Panc1 (cell line): ENCODE measurements at regions of chr6 and their contacts with region 1.

Region 1: DNA sequence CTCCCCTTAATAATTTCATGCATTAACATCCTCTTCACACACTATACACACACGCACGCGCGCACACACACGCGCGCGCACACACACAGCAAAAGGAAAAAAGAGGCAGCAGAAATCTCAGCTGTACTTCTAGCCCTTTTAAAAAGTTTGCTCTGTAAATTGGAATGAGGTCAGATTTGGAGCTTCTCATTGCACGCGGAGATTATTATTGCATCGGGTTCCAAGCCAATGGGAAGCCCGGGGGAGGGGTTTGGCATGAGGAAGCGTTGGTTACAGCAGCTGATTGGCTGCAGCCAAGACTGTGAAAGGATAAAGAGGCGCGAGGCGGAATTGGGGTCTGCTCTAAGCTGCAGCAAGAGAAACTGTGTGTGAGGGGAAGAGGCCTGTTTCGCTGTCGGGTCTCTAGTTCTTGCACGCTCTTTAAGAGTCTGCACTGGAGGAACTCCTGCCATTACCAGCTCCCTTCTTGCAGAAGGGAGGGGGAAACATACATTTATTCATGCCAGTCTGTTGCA is at the start of gene SOX4:
- DNase-seq: peak; percentile 82
- ATAC-seq: peak; percentile 80
- H3K4me3 ChIP-seq: peak within 1 kb of the TSS; percentile 95 to 96
- H3K27ac ChIP-seq: peak within 1 kb of the TSS; percentile 96
- H3K4me1 ChIP-seq: peaks cover 25% of the 10 kb centered on the region
- H3K27me3 ChIP-seq: no peaks in the 10 kb centered on the region
- CTCF ChIP-seq: no peak
- total RNA-seq, gene SOX4: 71.9 TPM

Region 2: DNA sequence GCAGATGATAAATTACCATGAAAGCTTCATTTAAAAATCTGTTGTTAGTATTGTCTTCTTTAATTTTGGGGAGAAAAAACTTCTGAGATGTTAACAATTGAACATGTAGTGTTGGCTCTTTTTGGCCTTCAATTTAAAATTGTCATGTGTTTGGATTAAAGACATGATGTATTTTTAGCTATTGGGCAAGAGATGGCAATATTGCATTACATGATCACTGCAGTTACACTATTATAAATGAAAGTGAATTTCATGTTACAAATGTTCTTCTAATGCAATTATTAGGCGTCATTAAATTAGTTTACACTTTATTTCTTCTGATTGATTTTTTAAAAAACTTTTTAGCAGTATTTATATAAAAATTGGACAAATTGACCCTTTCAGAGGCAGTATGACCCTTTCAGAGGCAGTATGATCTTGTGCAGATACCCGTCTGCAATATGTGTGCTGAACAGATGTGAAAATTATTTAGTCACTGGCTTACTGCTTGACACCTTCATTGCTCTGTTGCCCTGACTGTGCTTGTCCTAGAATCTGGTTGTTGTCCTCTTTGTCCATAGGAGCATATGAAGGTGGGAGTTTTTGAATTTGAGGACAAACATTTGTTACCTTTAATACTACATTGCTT is 1033.4 kb before region 1 on chr6:
- CTCF ChIA-PET with region 1: interaction called, 8 read pairs
- POLR2A ChIA-PET with region 1: no interaction called
- in situ Hi-C with region 1: no loop called
- intact Hi-C with region 1: loop called (anchors 2 kb)
- DNase-seq: no peak
- ATAC-seq: no peak
- H3K4me3 ChIP-seq: no peak overlapping the region
- H3K27ac ChIP-seq: no peak overlapping the region
- H3K4me1 ChIP-seq: peaks cover 6% of the 10 kb centered on the region; the same call in 1 of the 2 replicates
- H3K27me3 ChIP-seq: no peaks in the 10 kb centered on the region
- CTCF ChIP-seq: no peak

Region 3: DNA sequence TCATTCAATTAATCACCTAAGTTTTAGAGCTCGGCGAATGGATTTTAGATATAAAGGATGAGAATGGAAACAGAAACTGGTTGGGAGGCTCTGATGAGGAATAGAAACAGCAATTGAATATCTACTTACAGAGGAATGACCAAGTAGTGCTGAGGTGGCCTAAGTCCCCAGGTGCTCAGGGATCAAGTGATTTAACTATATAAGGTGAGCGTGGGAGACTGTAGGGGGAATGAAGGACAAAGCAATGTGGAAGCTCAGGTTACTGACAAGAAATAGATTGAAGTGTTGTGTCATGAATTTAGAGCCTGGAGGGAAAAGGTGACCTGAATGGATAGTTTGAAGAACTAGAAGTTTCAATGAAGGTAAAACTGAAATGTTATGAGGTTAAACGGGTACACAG is 495.3 kb before region 1 on chr6:
- CTCF ChIA-PET with region 1: interaction called, 15 read pairs
- POLR2A ChIA-PET with region 1: no interaction called
- in situ Hi-C with region 1: no loop called
- intact Hi-C with region 1: no loop called
- DNase-seq: no peak
- ATAC-seq: no peak
- H3K4me3 ChIP-seq: no peak overlapping the region
- H3K27ac ChIP-seq: no peak overlapping the region
- H3K4me1 ChIP-seq: no peaks in the 10 kb centered on the region
- H3K27me3 ChIP-seq: no peaks in the 10 kb centered on the region
- CTCF ChIP-seq: no peak

Region 4: GRCh38 chr6:21634582-21634981 is 41.1 kb after region 1 on chr6:
- CTCF ChIA-PET with region 1: no interaction called
- POLR2A ChIA-PET with region 1: no interaction called
- in situ Hi-C with region 1: no loop called
- intact Hi-C with region 1: no loop called
- DNase-seq: peak; percentile 84
- ATAC-seq: peak; percentile 92
- H3K4me3 ChIP-seq: no peak overlapping the region
- H3K27ac ChIP-seq: peak overlapping the region; percentile 58; the same call in 1 of the 2 replicates
- H3K4me1 ChIP-seq: no peaks in the 10 kb centered on the region
- H3K27me3 ChIP-seq: no peaks in the 10 kb centered on the region
- CTCF ChIP-seq: no peak

Region 5: GRCh38 chr6:21664314-21665109 is 71.0 kb after region 1 on chr6:
- CTCF ChIA-PET with region 1: no interaction called
- POLR2A ChIA-PET with region 1: interaction called, 12 read pairs
- in situ Hi-C with region 1: no loop called
- intact Hi-C with region 1: no loop called
- DNase-seq: no peak
- ATAC-seq: peak; percentile 63
- H3K4me3 ChIP-seq: peak overlapping the region; percentile 33 to 78
- H3K27ac ChIP-seq: no peak overlapping the region; the same call in 1 of the 2 replicates
- H3K4me1 ChIP-seq: no peaks in the 10 kb centered on the region; the same call in none of the 2 replicates
- H3K27me3 ChIP-seq: no peaks in the 10 kb centered on the region
- CTCF ChIP-seq: no peak

Region 6: GRCh38 chr6:21752054-21752811 is 158.8 kb after region 1 on chr6:
- CTCF ChIA-PET with region 1: no interaction called
- POLR2A ChIA-PET with region 1: no interaction called
- in situ Hi-C with region 1: no loop called
- intact Hi-C with region 1: no loop called
- DNase-seq: no peak
- ATAC-seq: peak; percentile 73
- H3K4me3 ChIP-seq: no peak overlapping the region
- H3K27ac ChIP-seq: peak overlapping the region; percentile 100
- H3K4me1 ChIP-seq: peaks cover 88% of the 10 kb centered on the region
- H3K27me3 ChIP-seq: no peaks in the 10 kb centered on the region
- CTCF ChIP-seq: no peak

Region 7: GRCh38 chr6:21808045-21808470 is 214.6 kb after region 1 on chr6:
- CTCF ChIA-PET with region 1: no interaction called
- POLR2A ChIA-PET with region 1: interaction called, 10 read pairs
- in situ Hi-C with region 1: no loop called
- intact Hi-C with region 1: loop called (anchors 10 kb)
- DNase-seq: no peak
- ATAC-seq: peak; percentile 87
- H3K4me3 ChIP-seq: peak overlapping the region in 1 of 2 experiments; percentile 19; a peak in 2 of 4 replicates
- H3K27ac ChIP-seq: peak overlapping the region; percentile 97
- H3K4me1 ChIP-seq: peaks cover 30% of the 10 kb centered on the region
- H3K27me3 ChIP-seq: no peaks in the 10 kb centered on the region
- CTCF ChIP-seq: no peak

Region 8: DNA sequence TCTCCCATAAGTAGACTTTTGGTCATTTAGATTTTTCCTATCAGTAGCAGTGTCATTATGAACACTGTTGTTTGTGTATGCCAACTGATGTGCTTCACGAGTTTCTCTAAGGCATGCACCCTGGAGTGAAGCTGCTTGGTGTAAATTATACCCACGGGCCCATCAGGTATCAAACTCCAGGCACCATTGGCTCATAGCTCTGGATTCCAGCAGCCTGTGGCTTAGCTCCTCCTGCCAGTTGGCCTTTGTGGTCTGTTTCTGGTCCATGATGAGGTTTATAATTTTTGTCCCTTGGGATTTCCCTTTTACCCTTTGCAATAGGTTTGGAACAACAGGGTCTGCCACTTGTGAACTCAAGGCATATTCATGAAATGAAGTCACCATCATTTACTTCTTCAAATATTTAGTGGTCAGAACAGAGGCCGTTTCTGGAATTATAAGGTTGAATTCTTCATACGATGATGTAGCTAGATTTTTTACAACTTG is 352.9 kb after region 1 on chr6:
- CTCF ChIA-PET with region 1: no interaction called
- POLR2A ChIA-PET with region 1: no interaction called
- in situ Hi-C with region 1: no loop called
- intact Hi-C with region 1: no loop called
- DNase-seq: no peak
- ATAC-seq: no peak
- H3K4me3 ChIP-seq: no peak overlapping the region
- H3K27ac ChIP-seq: peak overlapping the region; percentile 30; the same call in 1 of the 2 replicates
- H3K4me1 ChIP-seq: peaks cover 7% of the 10 kb centered on the region; the same call in 1 of the 2 replicates
- H3K27me3 ChIP-seq: no peaks in the 10 kb centered on the region
- CTCF ChIP-seq: no peak

Region 9: DNA sequence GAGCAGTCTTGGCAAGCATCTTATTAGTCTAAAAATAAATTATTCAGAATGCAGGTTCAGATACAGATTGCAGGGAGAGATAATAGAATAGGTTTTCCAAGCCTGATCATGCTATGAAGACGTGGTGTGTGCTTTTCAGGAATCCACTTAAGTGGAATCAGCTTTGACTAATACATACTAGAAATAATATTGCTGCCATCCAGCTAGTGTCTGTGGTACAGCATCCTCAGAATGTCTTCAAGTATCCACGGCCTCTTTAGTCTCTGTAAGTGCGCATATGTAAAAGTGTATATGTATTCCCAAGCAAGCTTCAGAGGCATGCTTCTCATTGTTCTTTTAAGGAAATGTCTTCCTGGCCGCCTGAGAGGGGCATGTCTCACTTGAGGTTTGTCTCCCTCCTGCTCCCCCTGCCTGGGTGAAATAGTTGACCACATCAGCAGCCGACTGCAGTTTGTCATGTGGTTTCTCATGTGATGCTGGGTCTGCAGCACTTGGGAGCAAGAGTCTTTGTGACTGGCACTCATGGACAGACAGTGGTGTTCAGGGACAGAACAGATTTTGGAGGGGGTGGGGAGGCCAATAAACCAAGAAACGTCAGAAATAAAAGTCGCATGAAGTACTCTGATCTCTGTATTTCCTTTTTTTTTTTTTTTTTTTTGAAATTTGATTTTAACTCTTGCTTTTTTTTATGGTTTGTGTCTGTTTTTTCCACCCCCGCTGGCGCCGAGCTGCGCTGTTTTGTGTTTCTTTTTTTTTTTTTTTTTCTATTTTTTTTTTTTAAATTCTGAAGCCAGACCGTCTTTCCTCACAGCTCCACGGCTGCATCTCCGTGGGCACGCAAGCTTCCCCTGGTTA is 552.6 kb after region 1 on chr6:
- CTCF ChIA-PET with region 1: no interaction called
- POLR2A ChIA-PET with region 1: no interaction called
- in situ Hi-C with region 1: no loop called
- intact Hi-C with region 1: loop called (anchors 5 kb)
- DNase-seq: peak; percentile 25
- ATAC-seq: no peak
- H3K4me3 ChIP-seq: peak overlapping the region in 1 of 2 experiments; percentile 20; a peak in 1 of 4 replicates
- H3K27ac ChIP-seq: peak overlapping the region; percentile 67
- H3K4me1 ChIP-seq: peaks cover 47% of the 10 kb centered on the region
- H3K27me3 ChIP-seq: no peaks in the 10 kb centered on the region
- CTCF ChIP-seq: no peak; the same call in 1 of the 2 replicates

Region 10: GRCh38 chr6:22888163-22888752 is 1294.8 kb after region 1 on chr6:
- CTCF ChIA-PET with region 1: no interaction called
- POLR2A ChIA-PET with region 1: interaction called, 16 read pairs
- in situ Hi-C with region 1: no loop called
- intact Hi-C with region 1: no loop called
- DNase-seq: no peak
- ATAC-seq: peak; percentile 38; the same call in 1 of the 2 replicates
- H3K4me3 ChIP-seq: no peak overlapping the region
- H3K27ac ChIP-seq: peak overlapping the region; percentile 40; the same call in 1 of the 2 replicates
- H3K4me1 ChIP-seq: no peaks in the 10 kb centered on the region; the same call in 1 of the 2 replicates
- H3K27me3 ChIP-seq: no peaks in the 10 kb centered on the region
- CTCF ChIP-seq: no peak